Testis (tissue), 5 donors: ENCODE measurements at regions of chr15 and their contacts with region 1.

Region 1: DNA sequence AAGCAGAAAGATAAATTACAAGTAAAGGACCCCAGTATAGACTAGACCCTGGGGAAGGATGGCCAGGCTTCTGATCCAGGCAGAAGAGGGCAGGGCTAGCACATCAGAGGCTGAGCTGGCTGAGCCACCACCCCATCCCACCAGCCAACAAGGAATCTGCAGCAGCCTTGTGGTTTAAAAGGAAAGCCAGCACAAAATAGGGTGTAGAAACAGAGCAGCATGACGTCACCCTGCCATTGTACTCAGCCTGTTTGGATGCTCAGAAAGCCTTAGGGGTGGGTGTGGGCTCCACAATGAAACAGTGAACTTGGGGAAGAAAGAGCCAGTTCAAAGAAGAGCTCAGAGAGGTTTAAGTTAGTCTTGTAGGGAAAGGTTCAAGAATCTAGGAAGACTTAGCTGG is 28.2 kb downstream of the DUOX1 start:
- DNase-seq: no peak
- H3K4me3 ChIP-seq: no peak overlapping the region
- H3K27ac ChIP-seq: no peak overlapping the region
- H3K4me1 ChIP-seq: peaks cover 4% of the 10 kb centered on the region
- H3K27me3 ChIP-seq: no peaks in the 10 kb centered on the region
- CTCF ChIP-seq: no peak
- POLR2A ChIP-seq: no peak

Region 2: DNA sequence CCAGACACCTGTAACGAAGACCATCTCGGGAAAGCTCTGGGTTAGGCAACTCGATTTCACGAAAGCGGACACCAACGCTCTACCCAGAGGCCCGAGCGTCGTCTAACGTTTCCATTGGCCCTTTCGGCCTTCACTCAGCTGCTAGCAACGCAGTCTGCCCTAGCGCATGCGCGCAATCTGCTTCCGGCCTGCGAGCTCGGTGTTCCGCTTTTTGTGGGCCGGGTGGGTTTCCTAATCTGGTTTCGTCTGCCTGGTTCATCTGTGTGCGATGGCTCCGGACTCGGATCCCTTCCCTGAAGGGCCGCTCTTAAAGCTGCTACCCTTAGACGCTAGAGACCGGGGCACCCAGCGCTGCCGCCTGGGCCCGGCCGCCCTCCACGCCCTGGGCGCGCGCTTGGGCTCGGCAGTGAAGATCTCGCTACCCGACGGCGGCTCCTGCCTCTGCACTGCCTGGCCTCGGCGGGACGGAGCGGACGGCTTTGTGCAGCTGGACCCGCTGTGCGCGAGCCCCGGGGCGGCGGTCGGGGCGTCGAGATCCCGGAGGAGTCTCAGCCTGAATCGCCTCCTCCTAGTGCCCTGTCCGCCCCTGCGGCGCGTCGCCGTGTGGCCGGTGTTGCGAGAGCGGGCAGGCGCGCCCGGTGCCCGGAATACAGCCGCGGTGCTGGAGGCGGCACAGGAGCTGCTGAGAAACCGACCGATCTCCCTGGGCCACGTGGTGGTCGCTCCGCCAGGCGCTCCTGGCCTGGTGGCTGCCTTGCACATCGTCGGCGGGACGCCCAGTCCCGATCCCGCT is 244.4 kb after region 1 on chr15:
- intact Hi-C with region 1: loop called (anchors 10 kb)
- DNase-seq: peak; percentile 97
- H3K4me3 ChIP-seq: peak overlapping the region; percentile 91 to 93
- H3K27ac ChIP-seq: peak overlapping the region; percentile 86 to 92
- H3K4me1 ChIP-seq: peaks cover 4% of the 10 kb centered on the region
- H3K27me3 ChIP-seq: no peaks in the 10 kb centered on the region
- CTCF ChIP-seq: no peak
- POLR2A ChIP-seq: peak; percentile 61